ENCODE measurements at regions of chr7 and their contacts with region 1.

Region 1: DNA sequence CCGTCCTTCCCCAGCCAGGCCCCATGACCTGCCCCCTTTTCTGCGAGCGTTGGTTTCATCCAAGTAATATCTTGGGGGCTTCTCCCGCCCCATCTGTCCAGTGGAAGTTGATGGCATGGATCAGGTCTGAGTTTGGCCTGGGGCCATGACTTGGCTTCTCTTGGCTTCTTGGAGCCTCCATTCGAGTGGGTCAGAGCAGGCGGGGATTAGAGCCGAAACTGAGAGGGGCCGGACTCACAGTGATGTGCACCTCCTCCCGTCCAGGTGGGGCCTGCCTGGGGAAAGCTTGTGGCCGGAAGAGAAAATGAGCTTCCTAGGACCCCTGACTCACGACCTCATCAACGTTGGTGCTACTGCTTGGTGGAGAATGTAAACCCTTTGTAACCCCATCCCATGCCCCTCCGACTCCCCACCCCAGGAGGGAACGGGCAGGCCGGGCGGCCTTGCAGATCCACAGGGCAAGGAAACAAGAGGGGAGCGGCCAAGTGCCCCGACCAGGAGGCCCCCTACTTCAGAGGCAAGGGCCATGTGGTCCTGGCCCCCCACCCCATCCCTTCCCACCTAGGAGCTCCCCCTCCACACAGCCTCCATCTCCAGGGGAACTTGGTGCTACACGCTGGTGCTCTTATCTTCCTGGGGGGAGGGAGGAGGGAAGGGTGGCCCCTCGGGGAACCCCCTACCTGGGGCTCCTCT is 15.1 kb upstream of the LIMK1 start:
- DNase-seq: no peak
- ATAC-seq: no peak
- H3K4me3 ChIP-seq: no peak overlapping the region
- H3K27ac ChIP-seq: no peak overlapping the region
- H3K4me1 ChIP-seq: no peaks in the 10 kb centered on the region
- H3K27me3 ChIP-seq: no peaks in the 10 kb centered on the region
- CTCF ChIP-seq: no peak
- POLR2A ChIP-seq: no peak

Region 2: DNA sequence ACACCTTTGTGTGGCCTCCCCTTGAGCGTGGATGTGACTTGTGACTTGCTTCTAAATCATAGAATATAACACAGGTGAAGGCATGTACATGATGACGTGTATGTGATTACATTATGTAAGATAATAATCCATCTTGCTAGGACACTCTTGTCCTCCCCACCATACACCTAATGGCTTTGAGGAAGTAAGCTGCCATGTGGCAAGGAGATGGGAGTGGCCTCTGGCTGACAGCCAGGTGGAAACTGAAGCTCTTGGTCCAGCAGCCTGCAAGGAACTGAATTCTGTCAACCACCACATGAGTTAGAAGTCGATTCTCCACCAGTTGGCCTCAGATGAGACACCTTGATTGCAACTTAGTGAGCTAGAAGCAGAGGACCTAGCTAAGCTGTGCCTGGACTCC is 108.0 kb before region 1 on chr7:
- in situ Hi-C with region 1: no loop called
- intact Hi-C with region 1: no loop called
- DNase-seq: no peak
- ATAC-seq: no peak
- H3K4me3 ChIP-seq: no peak overlapping the region
- H3K27ac ChIP-seq: no peak overlapping the region
- H3K4me1 ChIP-seq: no peaks in the 10 kb centered on the region
- H3K27me3 ChIP-seq: no peaks in the 10 kb centered on the region
- CTCF ChIP-seq: no peak
- POLR2A ChIP-seq: no peak

Region 3: GRCh38 chr7:74183613-74184450 is 115.3 kb after region 1 on chr7:
- in situ Hi-C with region 1: no loop called
- intact Hi-C with region 1: loop called (anchors 5 kb)
- DNase-seq: no peak
- ATAC-seq: no peak
- H3K4me3 ChIP-seq: no peak overlapping the region
- H3K27ac ChIP-seq: peak overlapping the region; percentile 85 to 99 (median 94)
- H3K4me1 ChIP-seq: peaks cover 98 to 99% of the 10 kb centered on the region in 2 donors
- H3K27me3 ChIP-seq: no peaks in the 10 kb centered on the region
- CTCF ChIP-seq: no peak
- POLR2A ChIP-seq: no peak

Region 4: GRCh38 chr7:74206589-74207120 is 138.1 kb after region 1 on chr7:
- in situ Hi-C with region 1: no loop called
- intact Hi-C with region 1: loop called (anchors 5 kb)
- DNase-seq: peak; percentile 61 to 78
- ATAC-seq: peak; percentile 72 to 89
- H3K4me3 ChIP-seq: peak overlapping the region; percentile 17 to 44 (median 36)
- H3K27ac ChIP-seq: no peak overlapping the region
- H3K4me1 ChIP-seq: no peaks in the 10 kb centered on the region
- H3K27me3 ChIP-seq: no peaks in the 10 kb centered on the region
- CTCF ChIP-seq: peak; percentile 94 to 100 (median 96)
- POLR2A ChIP-seq: no peak